WTC11 (cell line): ENCODE measurements at regions of chr3 and their contacts with region 1.

Region 1: DNA sequence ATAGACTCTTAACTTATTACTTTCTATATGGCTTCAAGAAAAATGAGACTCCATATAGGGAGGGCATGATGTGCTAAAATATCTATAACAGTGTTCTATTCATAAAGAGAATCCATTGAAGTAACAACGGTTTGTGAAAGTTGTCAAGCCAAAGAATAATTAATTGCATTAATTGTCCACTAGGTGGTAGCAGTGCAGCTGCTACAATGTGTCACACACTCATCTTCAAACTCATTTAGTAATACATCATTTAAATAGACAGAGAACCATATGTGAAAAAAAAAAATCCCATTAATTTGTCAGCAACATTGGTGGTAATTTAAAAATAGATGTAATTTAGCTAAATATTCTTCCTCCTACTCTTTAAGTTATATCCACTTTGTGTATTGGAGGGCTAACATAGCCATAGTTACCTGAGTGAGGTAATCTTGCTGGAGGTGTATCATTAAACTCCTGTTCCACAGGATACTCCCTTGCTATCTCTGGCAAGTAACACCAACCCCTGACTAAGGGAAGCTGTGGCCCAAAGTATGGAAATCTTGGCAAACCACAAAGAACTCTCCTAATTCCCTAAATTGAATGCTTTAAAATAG is 3.7 kb upstream of the CPA3 start:
- DNase-seq: no peak
- ATAC-seq: no peak; the same call in 1 of the 2 replicates
- H3K4me3 Mint-ChIP-seq: no peak overlapping the region
- H3K27ac Mint-ChIP-seq: no peak overlapping the region
- H3K4me1 Mint-ChIP-seq: no peaks in the 10 kb centered on the region
- H3K27me3 Mint-ChIP-seq: no peaks in the 10 kb centered on the region
- CTCF ChIP-seq: peak; percentile 59

Region 2: GRCh38 chr3:148778926-148779325 is 82.4 kb before region 1 on chr3:
- CTCF ChIA-PET with region 1: no interaction called
- POLR2A ChIA-PET with region 1: no interaction called
- DNase-seq: no peak
- ATAC-seq: no peak
- H3K4me3 Mint-ChIP-seq: no peak overlapping the region
- H3K27ac Mint-ChIP-seq: no peak overlapping the region
- H3K4me1 Mint-ChIP-seq: no peaks in the 10 kb centered on the region
- H3K27me3 Mint-ChIP-seq: no peaks in the 10 kb centered on the region
- CTCF ChIP-seq: no peak

Region 3: DNA sequence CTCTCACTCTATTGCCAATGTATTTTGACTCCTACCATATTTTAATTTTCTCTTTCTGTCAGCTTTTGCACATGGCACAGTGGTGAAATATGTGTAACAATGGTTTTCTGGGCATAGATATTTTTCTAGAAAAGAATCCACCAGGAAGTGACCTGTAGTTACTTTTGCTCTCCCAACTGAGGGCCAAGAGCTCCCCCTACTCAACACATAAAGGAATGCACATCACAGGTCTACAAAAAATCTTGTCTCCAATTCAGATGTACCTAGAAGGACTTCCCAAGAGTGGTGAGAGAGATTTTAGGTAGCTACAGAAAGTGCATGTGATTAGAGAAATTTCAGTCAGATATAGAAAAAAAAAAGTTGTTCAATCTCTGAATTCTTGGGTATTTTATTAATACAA is 19.3 kb after region 1 on chr3:
- CTCF ChIA-PET with region 1: interaction called, 12 read pairs
- POLR2A ChIA-PET with region 1: no interaction called
- DNase-seq: peak; percentile 19
- ATAC-seq: peak; percentile 97
- H3K4me3 Mint-ChIP-seq: no peak overlapping the region
- H3K27ac Mint-ChIP-seq: no peak overlapping the region; the same call in 1 of the 2 replicates
- H3K4me1 Mint-ChIP-seq: no peaks in the 10 kb centered on the region; the same call in 1 of the 2 replicates
- H3K27me3 Mint-ChIP-seq: no peaks in the 10 kb centered on the region
- CTCF ChIP-seq: peak; percentile 34; the same call in 1 of the 2 replicates

Region 4: DNA sequence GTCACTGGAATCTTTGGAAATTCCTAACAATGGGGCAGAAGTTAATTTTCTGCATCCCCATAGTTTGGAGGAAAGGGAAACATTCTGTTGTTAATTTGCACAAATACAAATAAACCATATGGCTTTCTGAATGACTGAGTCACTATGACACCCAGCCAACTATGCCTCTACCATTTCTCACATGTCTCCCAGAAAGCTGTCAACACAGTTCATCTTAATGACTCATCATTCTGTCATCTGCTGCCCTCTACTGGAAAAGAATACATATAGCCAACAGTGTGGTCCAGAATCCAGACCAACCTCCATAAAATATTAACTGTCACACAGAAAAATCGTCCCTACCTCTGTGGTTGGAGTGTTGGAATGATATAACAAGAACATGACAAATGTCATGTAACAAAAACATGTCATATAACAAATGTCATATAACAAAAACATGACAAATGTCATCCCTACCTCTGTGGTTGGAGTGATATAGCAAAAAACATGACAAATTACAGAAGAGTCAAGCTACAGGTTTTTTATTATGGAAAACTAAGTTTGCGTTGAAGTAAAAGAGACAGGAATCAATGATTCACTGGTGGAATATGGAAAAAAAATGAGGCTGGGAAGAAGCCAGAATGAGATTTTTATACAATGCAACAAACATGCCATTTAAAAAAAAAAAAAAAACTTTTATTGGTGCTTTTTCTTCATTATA is 82.3 kb after region 1 on chr3:
- CTCF ChIA-PET with region 1: interaction called, 19 read pairs
- POLR2A ChIA-PET with region 1: no interaction called
- DNase-seq: no peak
- ATAC-seq: peak; percentile 81
- H3K4me3 Mint-ChIP-seq: no peak overlapping the region
- H3K27ac Mint-ChIP-seq: no peak overlapping the region
- H3K4me1 Mint-ChIP-seq: no peaks in the 10 kb centered on the region
- H3K27me3 Mint-ChIP-seq: no peaks in the 10 kb centered on the region
- CTCF ChIP-seq: peak; percentile 46